Cardiac septum (tissue), 1 donor: ENCODE measurements at regions of chr7 and their contacts with region 1.

Region 1: GRCh38 chr7:99558306-99559174 is at the start of gene ZNF655:
- DNase-seq: peak; percentile 92
- total RNA-seq, gene ZNF655: 42.1 TPM

Region 2: DNA sequence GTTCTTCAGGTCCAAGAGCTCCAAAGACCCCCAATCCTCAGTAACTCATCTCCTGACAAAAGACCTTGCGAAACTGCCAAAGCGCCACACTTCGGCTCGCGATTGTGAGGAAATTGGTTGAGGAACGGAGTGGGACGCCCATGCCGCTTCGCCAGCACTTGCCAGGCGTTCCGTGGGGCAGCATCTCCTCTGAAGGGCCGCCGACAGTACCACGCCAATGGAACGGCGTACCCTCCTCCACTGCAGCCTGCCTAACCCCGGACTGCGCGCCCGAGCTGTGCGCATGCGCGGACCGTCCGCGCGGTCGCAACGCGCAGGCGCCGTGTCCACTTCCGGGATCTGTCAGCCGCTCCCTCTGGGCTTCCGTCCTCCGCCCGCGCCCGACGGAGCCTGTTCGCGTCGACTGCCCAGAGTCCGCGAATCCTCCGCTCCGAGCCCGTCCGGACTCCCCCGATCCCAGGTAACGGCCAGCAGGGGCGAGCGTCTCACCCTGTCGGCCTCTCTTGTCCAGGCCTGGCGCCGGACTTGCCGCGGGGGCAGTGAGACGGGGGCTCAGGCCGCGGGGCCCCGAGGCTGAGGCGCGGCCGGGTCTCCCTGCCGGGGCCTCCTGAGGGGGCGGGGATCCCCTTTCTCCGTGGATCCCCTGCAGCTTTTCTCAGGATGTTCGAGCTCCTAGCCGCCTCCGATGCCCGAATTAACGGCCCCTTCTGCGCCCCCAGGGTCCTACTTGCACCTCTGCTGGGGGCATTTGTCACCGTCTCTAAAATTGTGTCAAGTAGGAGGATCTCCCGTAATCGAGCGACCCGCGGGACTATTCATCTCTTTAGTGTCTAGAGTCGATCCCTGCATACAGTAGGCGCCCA is 232.8 kb before region 1 on chr7 and contains the start of gene ARPC1A:
- intact Hi-C with region 1: no loop called
- DNase-seq: peak; percentile 94
- total RNA-seq, gene ARPC1A: 116 TPM

Region 3: GRCh38 chr7:99616359-99617191 is 58.0 kb after region 1 on chr7 and contains the start of gene ZSCAN25:
- intact Hi-C with region 1: loop called (anchors 5 kb)
- DNase-seq: peak; percentile 94
- total RNA-seq, gene ZSCAN25: 10.4 TPM